HEK293 (cell line): ENCODE measurements at regions of chr14 and their contacts with region 1.

Region 1: DNA sequence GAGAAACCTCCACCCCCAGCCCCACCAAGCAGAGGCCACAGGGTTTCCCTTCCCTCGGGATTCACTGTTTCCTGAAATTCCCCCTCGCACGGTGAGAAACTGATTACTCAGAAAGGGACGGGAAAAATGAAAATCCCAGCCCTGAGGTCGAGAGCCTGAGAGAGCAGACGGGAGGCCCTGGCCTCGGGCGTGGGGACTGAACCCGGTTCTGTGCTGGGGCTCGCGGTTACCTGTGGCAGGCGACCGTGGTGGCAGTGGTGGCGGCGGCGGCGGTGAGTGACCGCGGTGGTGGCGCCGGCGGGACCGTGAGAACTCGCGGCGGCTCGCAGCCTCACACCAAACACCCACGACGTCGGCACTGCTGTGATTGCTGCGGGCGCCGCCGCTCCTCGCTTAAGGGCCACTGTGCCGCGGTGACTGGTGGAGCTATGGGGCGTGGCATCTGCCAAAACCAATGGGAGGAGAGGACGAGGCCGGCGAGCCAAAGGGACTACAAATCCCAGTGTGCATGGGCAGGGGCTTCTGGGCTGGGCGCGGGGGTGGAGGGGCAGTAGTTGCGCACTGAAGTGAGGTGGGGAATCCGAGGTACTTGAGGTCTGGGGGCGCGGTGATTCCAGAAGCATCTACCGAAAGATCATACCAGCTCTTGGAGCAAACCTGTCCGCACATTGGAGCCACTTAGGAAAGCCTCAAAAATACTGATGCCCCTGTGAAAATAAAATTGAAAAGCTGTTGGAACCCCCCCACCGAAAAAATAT is at the start of gene LGMN:
- H3K4me3 ChIP-seq: peak within 1 kb of the TSS; percentile 88
- H3K27ac ChIP-seq: peak within 1 kb of the TSS; percentile 44; the same call in 1 of the 2 replicates
- H3K4me1 ChIP-seq: no peaks in the 10 kb centered on the region
- CTCF ChIP-seq: no peak

Region 2: GRCh38 chr14:92551044-92551841 is 197.2 kb before region 1 on chr14:
- CTCF ChIA-PET with region 1: no interaction called
- POLR2A ChIA-PET with region 1: no interaction called
- H3K4me3 ChIP-seq: no peak overlapping the region
- H3K27ac ChIP-seq: no peak overlapping the region
- H3K4me1 ChIP-seq: no peaks in the 10 kb centered on the region
- CTCF ChIP-seq: no peak

Region 3: GRCh38 chr14:92651106-92651757 is 97.2 kb before region 1 on chr14:
- CTCF ChIA-PET with region 1: no interaction called
- POLR2A ChIA-PET with region 1: no interaction called
- H3K4me3 ChIP-seq: no peak overlapping the region
- H3K27ac ChIP-seq: no peak overlapping the region
- H3K4me1 ChIP-seq: no peaks in the 10 kb centered on the region
- CTCF ChIP-seq: no peak

Region 4: DNA sequence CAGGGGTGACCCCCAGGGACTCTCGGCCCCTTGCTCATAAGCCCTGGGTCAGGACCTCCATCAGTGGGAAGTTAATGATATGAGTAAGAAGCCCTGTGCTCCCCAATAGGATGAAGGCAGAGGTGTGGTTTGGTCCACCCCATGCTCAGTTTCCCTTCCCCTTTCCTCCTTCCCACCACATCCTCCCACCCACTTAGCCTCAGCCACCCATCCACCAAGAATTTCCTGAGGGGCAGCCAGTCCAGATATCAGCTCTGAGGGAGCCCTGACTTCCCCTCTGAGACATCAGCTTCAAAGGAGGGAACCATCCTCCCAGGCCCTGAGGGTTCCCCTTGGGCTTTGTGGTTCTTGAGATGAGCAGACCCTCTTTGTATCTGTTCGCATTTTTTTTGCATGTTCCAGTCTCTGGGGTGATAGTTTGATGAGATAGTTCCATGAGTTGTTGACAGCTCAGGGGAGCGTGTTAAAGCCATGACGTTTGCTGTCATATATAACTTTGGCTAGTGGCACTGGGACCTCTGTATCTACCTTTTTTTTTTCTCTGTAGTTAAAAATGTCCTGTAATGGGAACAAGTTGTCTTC is 71.3 kb before region 1 on chr14:
- CTCF ChIA-PET with region 1: no interaction called
- POLR2A ChIA-PET with region 1: no interaction called
- H3K4me3 ChIP-seq: no peak overlapping the region
- H3K27ac ChIP-seq: no peak overlapping the region
- H3K4me1 ChIP-seq: no peaks in the 10 kb centered on the region
- CTCF ChIP-seq: no peak

Region 5: DNA sequence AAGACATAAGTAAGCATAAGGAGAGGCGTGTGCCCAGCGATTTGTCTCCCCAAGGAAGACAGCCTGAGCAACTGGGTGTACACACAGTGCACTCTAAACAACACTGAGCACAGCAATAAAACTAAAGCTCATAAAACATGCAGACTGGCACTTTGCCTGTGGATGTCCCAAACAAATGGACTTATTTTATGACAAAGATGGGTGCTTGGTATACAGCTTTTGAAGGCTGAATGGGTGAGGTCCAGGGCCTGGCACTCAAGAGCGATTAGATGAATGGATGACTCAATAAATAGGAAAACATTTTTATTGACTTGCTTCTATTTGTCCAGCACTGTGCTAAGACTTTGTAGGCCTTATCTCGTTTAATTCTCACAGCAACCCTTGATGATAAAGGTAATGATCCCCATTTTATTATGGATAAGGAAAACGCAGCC is 28.5 kb before region 1 on chr14:
- CTCF ChIA-PET with region 1: no interaction called
- POLR2A ChIA-PET with region 1: interaction called, 34 read pairs
- H3K4me3 ChIP-seq: no peak overlapping the region
- H3K27ac ChIP-seq: no peak overlapping the region
- H3K4me1 ChIP-seq: peaks cover 3% of the 10 kb centered on the region
- CTCF ChIP-seq: no peak

Region 6: DNA sequence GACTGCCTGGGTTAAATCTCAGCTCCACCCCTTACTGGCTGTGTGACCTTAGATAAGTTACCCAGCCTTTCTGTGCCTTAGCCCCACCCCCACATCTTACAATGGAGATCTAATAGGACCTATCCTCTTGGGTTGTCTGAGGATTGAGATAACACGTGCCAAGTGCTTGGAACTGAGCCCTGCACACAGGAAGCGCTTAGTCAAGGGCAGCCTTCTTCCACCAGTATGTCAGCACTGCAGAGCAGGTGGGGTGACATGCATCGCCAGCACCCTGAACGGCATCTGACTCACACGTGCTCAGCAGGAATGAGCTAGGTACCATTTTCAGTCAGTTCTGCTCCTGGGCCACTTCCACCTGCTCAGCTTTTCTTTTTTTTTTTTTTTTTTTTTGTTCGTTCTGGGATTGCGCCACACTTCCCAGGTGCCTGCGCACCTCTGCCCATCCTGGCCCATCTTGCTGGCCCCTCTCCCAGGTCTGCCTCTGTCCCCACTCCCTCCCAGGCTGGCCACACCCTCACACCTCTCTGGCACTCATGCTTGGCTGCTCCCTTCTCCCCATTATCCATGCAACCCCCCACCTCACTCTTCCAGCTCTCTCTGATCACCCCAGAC is 19.6 kb before region 1 on chr14:
- CTCF ChIA-PET with region 1: no interaction called
- POLR2A ChIA-PET with region 1: interaction called, 34 read pairs
- H3K4me3 ChIP-seq: no peak overlapping the region
- H3K27ac ChIP-seq: no peak overlapping the region
- H3K4me1 ChIP-seq: no peaks in the 10 kb centered on the region
- CTCF ChIP-seq: no peak

Region 7: DNA sequence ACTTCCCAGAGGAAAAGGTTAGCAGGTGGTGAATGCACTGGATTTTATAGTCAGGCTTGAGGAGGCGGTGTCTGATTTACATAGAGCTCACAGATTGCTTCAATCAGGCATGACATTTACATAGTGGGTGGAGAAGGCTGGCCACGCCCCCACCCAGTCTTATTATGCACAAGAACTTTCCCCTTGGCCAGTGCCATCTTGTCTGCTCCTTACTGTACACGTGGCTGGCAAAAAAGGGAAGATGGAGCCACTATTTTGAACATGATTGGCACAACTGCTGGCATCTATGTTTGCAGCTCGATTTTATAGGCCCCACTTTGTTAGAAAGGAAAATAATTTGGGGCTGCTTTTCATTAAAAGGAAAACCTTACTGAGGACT is 10.9 kb after region 1 on chr14:
- CTCF ChIA-PET with region 1: interaction called, 3 read pairs
- POLR2A ChIA-PET with region 1: interaction called, 28 read pairs
- H3K4me3 ChIP-seq: no peak overlapping the region
- H3K27ac ChIP-seq: no peak overlapping the region
- H3K4me1 ChIP-seq: no peaks in the 10 kb centered on the region
- CTCF ChIP-seq: no peak

Region 8: DNA sequence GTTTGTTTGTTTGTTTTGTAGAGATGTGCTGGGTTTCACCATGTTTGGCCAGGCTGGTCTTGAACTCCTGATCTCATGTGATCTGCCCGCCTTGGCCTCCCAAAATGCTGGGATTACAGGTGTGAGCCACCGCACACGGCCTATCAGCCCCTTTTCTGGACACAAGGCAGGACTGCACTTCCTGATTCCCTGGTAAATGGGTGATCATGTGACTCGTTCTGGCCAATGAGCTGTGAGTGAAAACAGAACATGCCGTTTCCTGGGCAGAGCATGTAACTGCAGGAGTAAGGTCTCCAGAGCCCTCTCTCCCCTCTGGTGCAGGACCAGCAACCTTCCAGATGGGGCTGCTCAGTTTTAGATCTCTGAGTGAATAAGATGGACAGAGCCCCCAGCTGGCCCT is 274.6 kb after region 1 on chr14:
- CTCF ChIA-PET with region 1: no interaction called
- POLR2A ChIA-PET with region 1: no interaction called
- H3K4me3 ChIP-seq: no peak overlapping the region
- H3K27ac ChIP-seq: no peak overlapping the region
- H3K4me1 ChIP-seq: no peaks in the 10 kb centered on the region
- CTCF ChIP-seq: no peak